Activated CD4-positive, alpha-beta memory T cell treated with anti-CD3 and anti-CD28 coated beads, Interleukin-2, amount 10 ng/mL, durations not matched to agents 7 days and 5 days (primary cell): ENCODE measurements at regions of chr5 and their contacts with region 1.

Region 1: GRCh38 chr5:149828161-149828884 is 98.2 kb downstream of the PPARGC1B start:
- DNase-seq: peak; percentile 85
- H3K4me3 Mint-ChIP-seq: no peak overlapping the region
- H3K27ac Mint-ChIP-seq: no peak overlapping the region
- H3K4me1 Mint-ChIP-seq: peaks cover 9% of the 10 kb centered on the region
- H3K27me3 Mint-ChIP-seq: no peaks in the 10 kb centered on the region

Region 2: DNA sequence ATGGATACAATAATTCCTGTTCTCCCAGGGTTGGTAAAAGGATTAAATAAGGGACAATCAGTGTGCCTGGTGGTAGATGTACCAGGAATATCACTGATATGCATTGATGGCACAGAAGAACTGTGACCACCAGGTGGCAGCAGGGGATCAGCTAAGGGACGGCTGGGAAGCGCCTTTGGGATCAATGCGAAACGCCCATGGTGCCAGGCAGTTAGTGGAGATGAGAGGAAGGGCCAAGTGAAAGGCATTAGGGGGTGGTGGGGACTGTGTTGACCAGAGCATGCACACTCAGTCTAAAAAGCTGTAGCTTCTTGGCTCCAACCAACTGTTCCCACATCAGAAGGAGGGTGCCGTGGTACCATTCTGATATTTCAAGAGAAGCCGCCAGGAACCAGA is 191.5 kb before region 1 on chr5:
- CTCF ChIA-PET with region 1: interaction called, 96 read pairs
- POLR2A ChIA-PET with region 1: interaction called, 3 read pairs
- DNase-seq: peak; percentile 59
- H3K4me3 Mint-ChIP-seq: no peak overlapping the region
- H3K27ac Mint-ChIP-seq: no peak overlapping the region
- H3K4me1 Mint-ChIP-seq: peaks cover 16% of the 10 kb centered on the region
- H3K27me3 Mint-ChIP-seq: no peaks in the 10 kb centered on the region

Region 3: GRCh38 chr5:149656576-149657182 is 171.6 kb before region 1 on chr5:
- CTCF ChIA-PET with region 1: interaction called, 19 read pairs
- POLR2A ChIA-PET with region 1: no interaction called
- DNase-seq: peak; percentile 33
- H3K4me3 Mint-ChIP-seq: no peak overlapping the region
- H3K27ac Mint-ChIP-seq: no peak overlapping the region
- H3K4me1 Mint-ChIP-seq: no peaks in the 10 kb centered on the region
- H3K27me3 Mint-ChIP-seq: peaks cover 3% of the 10 kb centered on the region